Naive thymus-derived CD4-positive, alpha-beta T cell (primary cell): ENCODE measurements at regions of chr5 and their contacts with region 1.

Region 1: DNA sequence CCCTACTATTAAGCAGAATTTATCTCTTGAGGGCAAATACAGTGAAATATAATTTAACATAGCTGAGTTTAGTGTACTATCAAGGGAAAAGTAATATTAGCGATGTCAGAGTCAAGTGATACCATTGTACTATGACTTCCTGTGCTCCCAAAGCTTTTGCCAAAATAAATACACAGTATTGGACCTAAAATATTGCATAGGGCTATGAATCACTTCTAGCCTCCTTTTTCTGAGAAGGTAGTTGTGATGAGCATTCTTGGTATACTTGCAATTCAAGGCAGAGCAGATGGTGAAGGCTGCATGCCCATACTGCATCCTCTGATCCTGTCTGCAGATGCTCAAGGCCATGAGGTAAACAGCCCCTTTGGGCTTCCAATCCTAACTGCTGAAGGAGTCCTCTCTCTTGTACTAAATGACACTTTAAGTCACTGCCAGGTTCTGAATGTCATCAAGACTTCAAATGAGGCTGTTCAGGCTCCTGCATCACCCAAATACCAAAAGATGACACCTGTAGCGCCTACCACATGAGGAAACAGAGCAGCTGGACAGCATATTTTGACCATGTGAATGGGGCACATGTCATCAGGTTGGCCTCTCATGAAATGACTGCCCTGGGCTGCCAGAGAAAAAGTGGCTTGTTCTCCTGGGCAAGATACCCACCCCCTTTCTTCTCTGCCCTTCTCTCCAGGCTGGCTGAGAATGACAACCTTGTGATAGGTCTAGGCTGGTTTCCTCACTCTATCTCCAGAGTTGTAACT is 29.7 kb upstream of the PPP2CA start:
- DNase-seq: no peak
- ATAC-seq: no peak
- H3K4me3 ChIP-seq: no peak overlapping the region
- H3K4me3 Mint-ChIP-seq: no peak overlapping the region
- H3K27ac ChIP-seq: no peak overlapping the region
- H3K27ac Mint-ChIP-seq: no peak overlapping the region
- H3K4me1 ChIP-seq: no peaks in the 10 kb centered on the region
- H3K4me1 Mint-ChIP-seq: peaks cover 0 to 2% (median 0%) of the 10 kb centered on the region in 7 donors
- H3K27me3 ChIP-seq: no peaks in the 10 kb centered on the region
- H3K27me3 Mint-ChIP-seq: peaks cover 0 to 22% (median 0%) of the 10 kb centered on the region in 5 donors

Region 2: GRCh38 chr5:134236820-134237219 is 18.8 kb before region 1 on chr5:
- CTCF ChIA-PET with region 1: interaction called, 11 read pairs
- POLR2A ChIA-PET with region 1: no interaction called
- intact Hi-C with region 1: no loop called
- DNase-seq: no peak
- ATAC-seq: no peak
- H3K4me3 ChIP-seq: no peak overlapping the region
- H3K4me3 Mint-ChIP-seq: no peak overlapping the region
- H3K27ac ChIP-seq: no peak overlapping the region
- H3K27ac Mint-ChIP-seq: no peak overlapping the region
- H3K4me1 ChIP-seq: no peaks in the 10 kb centered on the region
- H3K4me1 Mint-ChIP-seq: no peaks in the 10 kb centered on the region
- H3K27me3 ChIP-seq: no peaks in the 10 kb centered on the region
- H3K27me3 Mint-ChIP-seq: peaks cover 0 to 39% (median 3%) of the 10 kb centered on the region in 5 donors

Region 3: GRCh38 chr5:134769206-134769605 is 513.6 kb after region 1 on chr5:
- CTCF ChIA-PET with region 1: no interaction called
- POLR2A ChIA-PET with region 1: no interaction called
- intact Hi-C with region 1: no loop called
- DNase-seq: no peak
- ATAC-seq: no peak
- H3K4me3 ChIP-seq: no peak overlapping the region
- H3K4me3 Mint-ChIP-seq: no peak overlapping the region
- H3K27ac ChIP-seq: no peak overlapping the region
- H3K27ac Mint-ChIP-seq: no peak overlapping the region
- H3K4me1 ChIP-seq: no peaks in the 10 kb centered on the region
- H3K4me1 Mint-ChIP-seq: peaks cover 0 to 2% (median 0%) of the 10 kb centered on the region in 7 donors
- H3K27me3 ChIP-seq: no peaks in the 10 kb centered on the region
- H3K27me3 Mint-ChIP-seq: no peaks in the 10 kb centered on the region

Region 4: DNA sequence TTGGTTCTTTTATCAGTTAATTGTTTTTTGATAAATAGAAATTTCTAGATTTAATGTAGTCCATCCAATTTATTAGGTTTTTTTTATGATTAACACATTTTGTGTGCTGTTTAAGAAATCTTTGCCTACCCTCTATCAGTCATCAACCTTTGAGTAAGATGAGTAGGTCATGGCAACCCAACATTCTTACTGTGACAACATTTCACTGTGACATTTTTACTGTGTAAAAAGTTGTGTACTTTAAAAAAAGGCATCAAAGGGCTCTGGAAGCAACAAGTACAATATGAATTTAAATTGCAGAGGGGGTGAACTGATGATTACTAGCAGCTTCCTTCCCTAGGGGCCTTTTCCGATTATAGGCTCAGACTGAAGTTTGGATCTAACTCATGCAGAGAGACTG is 1154.8 kb after region 1 on chr5:
- CTCF ChIA-PET with region 1: no interaction called
- POLR2A ChIA-PET with region 1: no interaction called
- intact Hi-C with region 1: no loop called
- DNase-seq: no peak
- ATAC-seq: no peak
- H3K4me3 ChIP-seq: no peak overlapping the region
- H3K4me3 Mint-ChIP-seq: no peak overlapping the region
- H3K27ac ChIP-seq: no peak overlapping the region
- H3K27ac Mint-ChIP-seq: no peak overlapping the region
- H3K4me1 ChIP-seq: no peaks in the 10 kb centered on the region
- H3K4me1 Mint-ChIP-seq: no peaks in the 10 kb centered on the region
- H3K27me3 ChIP-seq: no peaks in the 10 kb centered on the region
- H3K27me3 Mint-ChIP-seq: peaks cover 0 to 57% (median 11%) of the 10 kb centered on the region in 5 donors